Breast epithelium (tissue), 4 donors: ENCODE measurements at regions of chr5 and their contacts with region 1.

Region 1: GRCh38 chr5:53463909-53464621 is 16.4 kb upstream of the FST start:
- DNase-seq: no peak
- H3K4me3 ChIP-seq: no peak overlapping the region
- H3K27ac ChIP-seq: no peak overlapping the region
- H3K4me1 ChIP-seq: no peaks in the 10 kb centered on the region
- H3K27me3 ChIP-seq: no peaks in the 10 kb centered on the region
- CTCF ChIP-seq: no peak
- POLR2A ChIP-seq: no peak

Region 2: GRCh38 chr5:53406630-53407316 is 57.3 kb before region 1 on chr5:
- intact Hi-C with region 1: no loop called
- DNase-seq: no peak
- H3K4me3 ChIP-seq: no peak overlapping the region
- H3K27ac ChIP-seq: no peak overlapping the region
- H3K4me1 ChIP-seq: no peaks in the 10 kb centered on the region
- H3K27me3 ChIP-seq: no peaks in the 10 kb centered on the region
- CTCF ChIP-seq: no peak
- POLR2A ChIP-seq: no peak

Region 3: DNA sequence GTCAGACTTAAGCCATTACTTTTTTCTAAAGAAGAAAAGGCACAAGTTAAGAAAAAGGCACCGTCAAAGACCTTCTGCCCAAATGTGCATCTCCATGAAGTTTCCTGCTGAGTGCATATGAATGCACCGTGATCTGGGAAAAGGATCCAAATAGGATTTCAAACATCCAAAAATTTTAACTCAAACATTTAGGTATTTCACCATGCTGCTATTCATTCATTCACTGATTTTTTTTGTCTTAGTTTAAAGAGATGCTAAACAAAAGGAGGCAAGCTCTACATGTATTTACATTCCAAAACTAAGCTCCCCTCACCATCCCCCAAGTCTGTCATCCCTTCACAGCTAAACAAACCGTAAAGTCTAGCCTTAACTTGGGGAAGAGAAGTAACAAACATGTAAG is 554.4 kb after region 1 on chr5:
- intact Hi-C with region 1: loop called (anchors 5 kb)
- DNase-seq: no peak
- H3K4me3 ChIP-seq: no peak overlapping the region
- H3K27ac ChIP-seq: no peak overlapping the region
- H3K4me1 ChIP-seq: no peaks in the 10 kb centered on the region
- H3K27me3 ChIP-seq: no peaks in the 10 kb centered on the region
- CTCF ChIP-seq: no peak
- POLR2A ChIP-seq: no peak